OCI-LY7 (cell line): ENCODE measurements at regions of chr11 and their contacts with region 1.

Region 1: GRCh38 chr11:77066229-77067042 is at the start of gene CAPN5:
- DNase-seq: peak; percentile 90
- H3K4me3 ChIP-seq: peak within 1 kb of the TSS; percentile 80
- H3K27ac ChIP-seq: no peak within 1 kb of the TSS
- H3K4me1 ChIP-seq: peaks cover 9% of the 10 kb centered on the region
- CTCF ChIP-seq: peak; percentile 52; the same call in 1 of the 2 replicates
- total RNA-seq, gene CAPN5: 0.98 and 1.4 TPM in 2 replicates

Region 2: DNA sequence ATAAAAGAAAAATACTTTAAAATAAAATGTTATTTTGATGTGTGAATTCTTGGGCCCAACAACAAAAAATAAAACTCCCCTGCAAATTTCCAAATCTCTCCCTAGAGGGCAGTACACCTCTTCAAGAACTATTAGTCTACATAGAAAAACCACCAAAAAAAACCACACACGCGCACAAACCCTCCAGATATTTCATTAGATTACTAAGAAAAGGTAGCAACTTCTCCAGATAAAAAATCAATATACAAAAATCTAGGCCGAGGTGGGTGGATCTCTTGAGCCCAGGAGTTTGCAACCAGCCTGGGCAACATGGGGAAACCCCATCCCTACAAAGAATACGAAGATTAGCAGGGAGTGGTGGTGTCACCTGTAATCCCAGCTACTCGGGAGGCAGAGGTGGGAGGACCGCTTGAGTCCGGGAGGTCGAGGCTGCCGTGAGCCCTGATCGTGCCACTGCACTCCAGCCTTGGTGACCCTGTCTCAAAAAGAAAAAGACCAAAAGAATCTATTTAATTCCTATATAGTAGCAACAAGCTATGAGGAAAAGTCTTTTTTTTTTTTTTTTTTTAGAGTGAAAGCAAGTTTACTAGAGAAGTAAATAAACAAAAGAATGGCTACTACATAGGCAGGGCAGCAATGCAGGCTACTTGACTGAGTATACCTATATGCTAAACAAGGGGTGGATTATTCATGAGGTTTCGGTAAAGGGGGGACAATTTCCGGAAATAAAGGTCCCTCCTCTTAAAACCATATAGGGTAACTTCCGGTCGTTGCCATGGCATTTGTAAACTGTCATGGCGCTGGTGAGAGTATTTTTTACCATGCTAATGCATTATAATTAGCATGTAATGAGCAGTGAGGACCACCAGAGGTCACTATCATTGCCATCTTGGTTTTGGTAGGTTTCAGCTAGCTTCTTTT is 19.2 kb before region 1 on chr11:
- CTCF ChIA-PET with region 1: no interaction called
- POLR2A ChIA-PET with region 1: interaction called, 3 read pairs
- intact Hi-C with region 1: loop called (anchors 1 kb)
- DNase-seq: peak; percentile 94
- H3K4me3 ChIP-seq: peak overlapping the region; percentile 50
- H3K27ac ChIP-seq: no peak overlapping the region
- H3K4me1 ChIP-seq: peaks cover 6% of the 10 kb centered on the region
- CTCF ChIP-seq: peak; percentile 85

Region 3: DNA sequence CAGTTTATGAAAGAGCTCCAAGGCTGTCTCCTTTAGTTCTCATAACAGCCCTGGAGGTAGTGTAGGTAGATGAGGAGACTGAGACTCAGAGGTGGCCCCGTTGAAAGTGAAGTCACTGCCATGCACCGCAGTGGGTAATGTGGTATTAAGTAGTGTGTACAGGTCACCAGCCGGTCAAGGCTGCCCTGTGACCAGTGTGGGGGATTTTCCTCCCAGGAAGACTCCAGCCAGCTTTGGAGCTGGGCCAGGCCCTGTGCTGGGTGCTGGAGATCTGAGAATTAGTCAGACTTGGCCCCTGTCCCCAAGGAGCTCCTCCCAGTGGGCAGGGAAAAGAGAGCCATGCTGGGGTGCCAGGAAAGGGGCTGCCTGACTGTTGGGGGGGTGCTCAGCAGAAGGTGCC is 41.5 kb after region 1 on chr11:
- CTCF ChIA-PET with region 1: no interaction called
- POLR2A ChIA-PET with region 1: no interaction called
- intact Hi-C with region 1: no loop called
- DNase-seq: no peak
- H3K4me3 ChIP-seq: no peak overlapping the region
- H3K27ac ChIP-seq: no peak overlapping the region
- H3K4me1 ChIP-seq: no peaks in the 10 kb centered on the region
- CTCF ChIP-seq: no peak

Region 4: DNA sequence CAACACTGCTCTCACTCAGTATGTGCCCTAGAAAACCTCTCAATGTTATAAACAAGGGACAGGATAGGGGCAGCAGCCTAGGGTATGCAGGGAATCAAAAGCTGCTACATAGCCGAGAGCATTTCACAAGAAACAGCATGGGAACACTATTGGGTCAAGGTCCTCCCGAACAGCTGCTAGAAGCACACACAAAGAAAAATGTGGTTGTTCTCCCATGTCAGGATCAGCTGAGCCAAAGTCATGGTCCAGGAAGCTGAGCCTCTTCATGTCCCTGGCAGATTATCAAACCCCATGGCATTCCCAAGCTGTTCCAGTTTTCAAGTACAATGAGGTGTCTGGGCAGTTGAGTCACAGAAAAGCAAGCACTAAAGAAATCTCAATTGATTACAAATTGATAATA is 256.1 kb after region 1 on chr11:
- CTCF ChIA-PET with region 1: no interaction called
- POLR2A ChIA-PET with region 1: no interaction called
- intact Hi-C with region 1: no loop called
- DNase-seq: no peak
- H3K4me3 ChIP-seq: no peak overlapping the region
- H3K27ac ChIP-seq: no peak overlapping the region
- H3K4me1 ChIP-seq: no peaks in the 10 kb centered on the region
- CTCF ChIP-seq: no peak